ENCODE measurements at regions of chr2 and their contacts with region 1.

Region 1: GRCh38 chr2:159030674-159031380 is 62.4 kb downstream of the TANC1 start:
- DNase-seq: peak; percentile 69
- ATAC-seq: peak; percentile 84

Region 2: GRCh38 chr2:159118115-159118858 is 87.5 kb after region 1 on chr2:
- intact Hi-C with region 1: loop called (anchors 2 kb)
- DNase-seq: peak; percentile 87
- ATAC-seq: peak; percentile 87

Region 3: DNA sequence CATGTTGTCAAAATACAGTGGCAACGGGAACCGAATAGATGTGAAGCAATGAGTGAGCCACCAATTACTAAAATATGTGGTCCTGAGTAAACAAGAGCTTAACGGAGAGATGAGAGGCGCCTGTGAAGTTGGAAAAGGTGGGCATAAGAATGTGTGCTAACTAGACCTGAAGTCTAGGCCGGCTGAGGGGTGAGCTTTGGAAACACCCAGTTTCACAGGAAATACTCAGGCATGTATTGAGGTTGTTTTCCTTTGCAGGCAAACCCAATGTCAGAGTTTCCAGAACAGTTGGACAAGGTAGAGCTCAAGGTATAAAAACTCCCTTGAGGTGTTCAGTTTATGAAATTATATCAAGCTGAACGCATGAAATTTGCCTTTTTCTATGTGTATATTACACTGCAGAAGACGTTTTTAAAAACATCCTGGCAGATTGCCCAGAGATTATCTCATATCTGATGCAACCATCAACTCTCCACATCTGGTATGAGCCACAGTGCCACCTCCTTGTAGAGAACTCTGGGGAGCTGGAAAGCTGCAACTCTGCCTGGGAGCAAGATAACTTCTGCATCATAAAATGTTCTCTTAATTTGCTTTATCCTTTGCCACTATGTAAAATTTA is 259.6 kb after region 1 on chr2:
- intact Hi-C with region 1: no loop called
- DNase-seq: no peak
- ATAC-seq: no peak

Region 4: GRCh38 chr2:160516547-160517365 is 1485.9 kb after region 1 on chr2:
- intact Hi-C with region 1: no loop called
- DNase-seq: no peak
- ATAC-seq: no peak